ENCODE measurements at regions of chr10 and their contacts with region 1.

Region 1: DNA sequence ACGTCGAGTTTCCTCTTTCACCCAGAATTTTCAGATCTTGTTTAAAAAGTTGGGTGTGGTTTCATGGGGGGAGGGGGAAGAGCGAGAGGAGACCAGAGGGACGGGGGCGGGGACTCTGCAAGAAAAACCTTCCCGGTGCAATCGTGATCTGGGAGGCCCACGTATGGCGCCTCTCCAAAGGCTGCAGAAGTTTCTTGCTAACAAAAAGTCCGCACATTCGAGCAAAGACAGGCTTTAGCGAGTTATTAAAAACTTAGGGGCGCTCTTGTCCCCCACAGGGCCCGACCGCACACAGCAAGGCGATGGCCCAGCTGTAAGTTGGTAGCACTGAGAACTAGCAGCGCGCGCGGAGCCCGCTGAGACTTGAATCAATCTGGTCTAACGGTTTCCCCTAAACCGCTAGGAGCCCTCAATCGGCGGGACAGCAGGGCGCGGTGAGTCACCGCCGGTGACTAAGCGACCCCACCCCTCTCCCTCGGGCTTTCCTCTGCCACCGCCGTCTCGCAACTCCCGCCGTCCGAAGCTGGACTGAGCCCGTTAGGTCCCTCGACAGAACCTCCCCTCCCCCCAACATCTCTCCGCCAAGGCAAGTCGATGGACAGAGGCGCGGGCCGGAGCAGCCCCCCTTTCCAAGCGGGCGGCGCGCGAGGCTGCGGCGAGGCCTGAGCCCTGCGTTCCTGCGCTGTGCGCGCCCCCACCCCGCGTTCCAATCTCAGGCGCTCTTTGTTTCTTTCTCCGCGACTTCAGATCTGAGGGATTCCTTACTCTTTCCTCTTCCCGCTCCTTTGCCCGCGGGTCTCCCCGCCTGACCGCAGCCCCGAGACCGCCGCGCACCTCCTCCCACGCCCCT is at the start of gene VIM:
- DNase-seq: peak; percentile 93
- H3K4me3 Mint-ChIP-seq: peak within 1 kb of the TSS; percentile 95
- H3K27ac Mint-ChIP-seq: peak within 1 kb of the TSS; percentile 87
- H3K4me1 Mint-ChIP-seq: peaks cover 42% of the 10 kb centered on the region
- H3K27me3 Mint-ChIP-seq: peaks cover 1% of the 10 kb centered on the region
- total RNA-seq, gene VIM: 515 to 525 TPM

Region 2: DNA sequence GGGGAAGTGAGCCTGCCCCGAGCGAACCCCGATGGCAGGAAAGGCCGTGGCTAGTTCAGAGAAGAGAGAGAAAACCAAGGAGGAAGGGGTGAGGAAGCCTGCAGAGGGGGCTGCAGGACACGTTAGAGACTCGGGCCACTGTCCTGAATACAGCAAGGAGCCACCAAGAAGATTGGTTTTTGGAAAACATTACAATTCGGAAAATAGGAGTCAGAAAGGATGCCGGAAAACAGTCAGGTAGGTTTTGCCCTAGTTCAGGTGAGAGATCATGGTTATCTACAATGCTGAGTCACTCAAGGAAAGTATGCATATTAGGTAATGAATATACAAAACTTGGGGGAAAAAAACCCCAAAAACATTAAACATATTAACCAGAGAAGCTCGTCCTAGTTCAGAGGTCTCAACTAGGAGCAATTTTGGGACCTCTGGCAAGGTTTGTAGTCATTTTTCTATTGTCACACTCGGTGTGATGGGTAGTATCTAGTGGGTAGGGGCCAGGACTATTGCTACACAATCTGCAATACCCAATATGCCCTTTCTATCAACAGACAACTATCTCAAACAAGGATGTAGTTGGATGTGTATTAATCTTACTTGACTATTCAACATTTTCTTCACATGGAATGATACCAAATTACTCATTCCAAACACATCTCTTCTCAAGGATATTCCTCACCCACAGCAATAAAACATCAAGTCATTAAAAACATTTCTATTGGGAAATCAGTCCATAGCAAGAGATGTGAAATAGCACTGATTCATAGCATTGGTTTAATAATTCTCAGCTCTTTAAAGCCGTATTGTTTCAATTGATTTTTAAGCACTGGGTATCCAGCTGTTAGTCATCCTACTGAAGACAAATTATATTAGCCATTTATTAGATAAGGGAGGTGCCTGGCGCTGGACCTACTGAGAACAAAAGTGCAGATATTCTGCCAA is 336.7 kb before region 1 on chr10:
- CTCF ChIA-PET with region 1: interaction called, 3 read pairs
- POLR2A ChIA-PET with region 1: interaction called, 13 read pairs
- intact Hi-C with region 1: loop called (anchors 1 kb)
- DNase-seq: peak; percentile 69
- H3K4me3 Mint-ChIP-seq: peak overlapping the region; percentile 65
- H3K27ac Mint-ChIP-seq: peak overlapping the region; percentile 63
- H3K4me1 Mint-ChIP-seq: peaks cover 11% of the 10 kb centered on the region
- H3K27me3 Mint-ChIP-seq: no peaks in the 10 kb centered on the region

Region 3: GRCh38 chr10:16950656-16951601 is 277.4 kb before region 1 on chr10:
- CTCF ChIA-PET with region 1: no interaction called
- POLR2A ChIA-PET with region 1: no interaction called
- intact Hi-C with region 1: no loop called
- DNase-seq: no peak
- H3K4me3 Mint-ChIP-seq: no peak overlapping the region
- H3K27ac Mint-ChIP-seq: no peak overlapping the region
- H3K4me1 Mint-ChIP-seq: peaks cover 3% of the 10 kb centered on the region
- H3K27me3 Mint-ChIP-seq: no peaks in the 10 kb centered on the region

Region 4: GRCh38 chr10:17144757-17145156 is 83.6 kb before region 1 on chr10:
- CTCF ChIA-PET with region 1: no interaction called
- POLR2A ChIA-PET with region 1: interaction called, 6 read pairs
- intact Hi-C with region 1: loop called (anchors 2 kb)
- DNase-seq: peak; percentile 77
- H3K4me3 Mint-ChIP-seq: no peak overlapping the region
- H3K27ac Mint-ChIP-seq: peak overlapping the region; percentile 34
- H3K4me1 Mint-ChIP-seq: peaks cover 20% of the 10 kb centered on the region
- H3K27me3 Mint-ChIP-seq: no peaks in the 10 kb centered on the region

Region 5: DNA sequence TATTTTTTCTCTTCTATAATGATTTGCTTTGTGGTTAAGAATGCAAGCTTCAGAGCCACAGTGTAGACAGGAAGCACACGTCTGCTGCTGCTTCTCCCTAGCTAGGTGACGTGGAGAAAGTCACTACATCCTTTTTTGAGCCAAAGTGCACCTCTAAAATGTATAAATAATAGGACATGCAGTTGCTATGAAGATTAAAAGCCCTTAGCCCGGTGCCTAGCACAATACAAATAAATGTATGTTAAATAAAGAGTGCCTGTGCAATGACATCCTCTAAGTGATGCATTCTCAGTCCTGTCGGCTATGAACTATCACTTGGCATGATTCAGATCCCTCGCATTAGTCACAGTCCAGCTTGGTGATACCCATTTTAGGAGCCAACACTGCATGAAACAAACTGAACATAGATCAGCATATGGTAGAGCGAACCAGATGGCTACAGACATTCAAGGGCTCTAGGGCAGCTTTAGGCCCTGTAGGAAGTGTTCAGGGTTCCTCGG is 22.1 kb before region 1 on chr10:
- CTCF ChIA-PET with region 1: interaction called, 29 read pairs
- POLR2A ChIA-PET with region 1: interaction called, 50 read pairs
- intact Hi-C with region 1: loop called (anchors 1 kb)
- DNase-seq: peak; percentile 63
- H3K4me3 Mint-ChIP-seq: peak overlapping the region; percentile 31
- H3K27ac Mint-ChIP-seq: peak overlapping the region; percentile 84
- H3K4me1 Mint-ChIP-seq: peaks cover 50% of the 10 kb centered on the region
- H3K27me3 Mint-ChIP-seq: no peaks in the 10 kb centered on the region

Region 6: GRCh38 chr10:17643755-17644484 is 415.6 kb after region 1 on chr10 and contains the start of gene STAM:
- CTCF ChIA-PET with region 1: no interaction called
- POLR2A ChIA-PET with region 1: interaction called, 3 read pairs
- intact Hi-C with region 1: loop called (anchors 2 kb)
- DNase-seq: peak; percentile 94
- H3K4me3 Mint-ChIP-seq: peak within 1 kb of the TSS; percentile 95
- H3K27ac Mint-ChIP-seq: peak within 1 kb of the TSS; percentile 99
- H3K4me1 Mint-ChIP-seq: peaks cover 53% of the 10 kb centered on the region
- H3K27me3 Mint-ChIP-seq: no peaks in the 10 kb centered on the region
- total RNA-seq, gene STAM: 24.5 to 29.9 TPM